PC-9 (cell line): ENCODE measurements at regions of chr3 and their contacts with region 1.

Region 1: DNA sequence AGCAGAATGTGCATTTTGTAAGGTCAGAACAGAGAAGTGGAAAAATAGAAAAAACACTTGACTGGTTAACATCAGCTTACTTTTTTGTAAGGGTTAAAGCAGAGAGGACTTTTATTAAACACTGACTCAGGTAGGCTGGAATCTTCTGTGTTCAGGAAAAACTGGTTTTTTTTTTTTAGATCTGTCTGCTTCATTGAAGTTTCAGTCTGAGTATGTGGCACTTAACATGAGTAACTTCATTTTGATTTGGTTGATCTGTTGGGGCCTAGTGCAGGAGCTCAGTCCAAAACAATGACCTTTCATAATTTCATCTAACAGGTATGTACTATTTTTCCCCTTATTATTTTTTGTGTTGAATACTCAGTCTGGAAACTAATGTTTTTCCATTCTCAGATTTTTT is 141.1 kb downstream of the DOCK3 start:
- DNase-seq: peak in 1 of 2 experiments; percentile 92
- H3K4me3 ChIP-seq: no peak overlapping the region
- H3K27ac ChIP-seq: peak overlapping the region; percentile 75
- H3K4me1 ChIP-seq: peaks cover 51% of the 10 kb centered on the region
- H3K27me3 ChIP-seq: no peaks in the 10 kb centered on the region
- CTCF ChIP-seq: no peak

Region 2: GRCh38 chr3:51311055-51311454 is 495.2 kb after region 1 on chr3:
- CTCF ChIA-PET with region 1: no interaction called
- POLR2A ChIA-PET with region 1: interaction called, 13 read pairs
- intact Hi-C with region 1: no loop called
- DNase-seq: no peak
- H3K4me3 ChIP-seq: no peak overlapping the region
- H3K27ac ChIP-seq: no peak overlapping the region
- H3K4me1 ChIP-seq: no peaks in the 10 kb centered on the region
- H3K27me3 ChIP-seq: no peaks in the 10 kb centered on the region
- CTCF ChIP-seq: peak; percentile 56

Region 3: DNA sequence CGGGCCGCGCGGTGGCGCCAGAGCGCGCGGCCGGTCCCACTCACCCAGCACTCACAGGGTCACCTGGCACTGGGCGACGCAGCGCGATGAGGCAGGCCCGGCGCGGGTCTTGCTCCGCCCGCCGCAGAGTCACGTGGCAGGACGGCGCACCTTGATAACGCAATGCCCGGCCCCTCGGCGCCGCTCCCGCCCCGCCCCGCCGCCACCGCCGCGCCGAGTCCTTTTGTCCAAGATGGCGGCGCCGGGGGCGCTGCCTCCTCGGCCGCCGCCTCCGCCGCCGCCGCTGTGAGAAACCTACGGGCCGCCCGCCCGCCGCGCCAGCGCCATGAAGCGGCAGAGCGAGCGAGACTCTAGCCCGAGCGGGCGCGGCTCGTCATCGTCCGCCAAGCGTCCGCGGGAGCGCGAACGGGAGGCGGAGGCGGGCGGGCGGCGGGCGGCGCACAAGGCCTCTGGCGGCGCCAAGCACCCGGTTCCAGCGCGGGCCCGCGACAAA is 575.3 kb after region 1 on chr3 and contains the start of gene RBM15B:
- CTCF ChIA-PET with region 1: no interaction called
- POLR2A ChIA-PET with region 1: interaction called, 12 read pairs
- intact Hi-C with region 1: no loop called
- DNase-seq: peak; percentile 79 to 97
- H3K4me3 ChIP-seq: peak within 1 kb of the TSS; percentile 68
- H3K27ac ChIP-seq: peak within 1 kb of the TSS; percentile 41
- H3K4me1 ChIP-seq: peaks cover 50% of the 10 kb centered on the region
- H3K27me3 ChIP-seq: no peaks in the 10 kb centered on the region
- CTCF ChIP-seq: no peak; the same call in 1 of the 2 replicates
- total RNA-seq, gene RBM15B: 29.1 and 29.4 TPM in 2 replicates